Transverse colon (tissue), 4 donors: ENCODE measurements at regions of chr2 and their contacts with region 1.

Region 1: DNA sequence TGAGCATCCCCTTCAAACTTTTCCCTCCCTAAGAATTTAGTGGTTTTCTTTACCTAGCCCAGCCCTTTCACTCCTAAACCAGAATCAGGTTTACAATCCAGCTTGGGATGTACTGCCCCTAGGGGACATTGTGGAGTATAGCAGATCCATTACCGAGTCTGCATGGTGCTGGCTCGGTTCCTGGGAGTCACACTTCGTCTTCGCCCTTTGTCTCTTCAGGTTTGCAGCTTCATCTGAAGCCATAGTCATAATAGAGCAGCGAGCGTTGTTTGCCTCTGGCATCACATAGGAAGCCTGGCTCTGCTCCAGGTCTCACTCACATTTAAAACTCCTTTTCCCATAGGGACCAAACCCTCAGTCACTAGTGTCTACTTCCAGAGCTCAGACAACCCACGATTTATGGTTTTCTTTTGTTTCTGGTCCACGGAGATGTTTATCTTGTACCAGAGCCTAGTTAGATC is 16.8 kb upstream of the LYPD6 start:
- DNase-seq: peak; percentile 37
- H3K4me3 ChIP-seq: no peak overlapping the region
- H3K27ac ChIP-seq: no peak overlapping the region
- H3K4me1 ChIP-seq: peaks cover 0 to 4% (median 1%) of the 10 kb centered on the region in 4 donors
- H3K27me3 ChIP-seq: no peaks in the 10 kb centered on the region
- CTCF ChIP-seq: peak; percentile 66 to 81 (median 77)
- EP300 ChIP-seq: no peak
- POLR2A ChIP-seq: no peak

Region 2: DNA sequence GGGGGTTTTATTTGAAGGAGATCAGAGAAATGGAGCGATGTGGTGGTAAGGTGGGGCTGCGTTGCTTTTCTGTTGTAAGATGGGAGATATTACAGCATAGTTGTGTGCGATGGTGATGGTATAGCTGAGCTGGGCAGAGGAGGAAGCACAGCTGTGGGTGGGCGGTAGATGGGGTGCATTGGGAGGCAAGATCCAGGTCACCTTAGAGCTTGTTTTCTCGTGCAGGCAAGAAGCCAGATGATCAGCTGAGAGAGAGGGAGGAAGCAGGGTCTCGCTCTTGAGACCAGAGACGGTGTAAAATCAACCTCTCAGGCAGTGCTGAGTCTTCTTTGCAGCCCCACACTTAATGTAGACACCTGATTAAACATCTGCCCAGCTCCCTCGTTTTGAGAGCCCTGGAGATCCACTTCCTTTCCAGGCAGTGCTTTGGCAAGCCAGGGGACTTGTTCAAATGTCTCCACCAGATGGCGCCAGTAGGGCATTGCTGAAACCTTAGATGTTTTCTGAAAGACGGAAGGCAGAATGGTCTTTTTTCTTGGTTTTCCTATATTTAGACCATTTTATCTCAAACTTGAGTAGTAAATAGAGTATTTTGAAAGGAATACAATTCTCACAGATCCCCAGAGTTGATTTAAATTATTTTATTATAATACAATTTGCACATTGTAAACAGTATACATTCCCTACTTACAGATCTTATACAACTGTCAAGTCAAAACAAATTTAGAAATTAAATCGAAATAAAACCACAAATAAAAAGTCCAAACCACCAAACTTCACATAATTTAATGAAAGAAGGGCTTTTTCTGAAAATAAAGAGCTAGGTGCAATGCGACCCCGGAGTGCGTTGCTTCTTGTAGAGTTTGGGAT is 296.2 kb before region 1 on chr2:
- in situ Hi-C with region 1: loop called in 1 of 4 experiments (anchors 10 kb)
- intact Hi-C with region 1: no loop called
- DNase-seq: peak; percentile 83
- H3K4me3 ChIP-seq: no peak overlapping the region
- H3K27ac ChIP-seq: no peak overlapping the region
- H3K4me1 ChIP-seq: peaks cover 0 to 20% (median 5%) of the 10 kb centered on the region in 4 donors
- H3K27me3 ChIP-seq: no peaks in the 10 kb centered on the region
- CTCF ChIP-seq: peak; percentile 80 to 89 (median 85)
- EP300 ChIP-seq: no peak
- POLR2A ChIP-seq: no peak

Region 3: GRCh38 chr2:149040451-149040850 is 273.1 kb before region 1 on chr2:
- in situ Hi-C with region 1: loop called in 1 of 4 experiments (anchors 25 kb)
- intact Hi-C with region 1: no loop called
- DNase-seq: peak; percentile 45
- H3K4me3 ChIP-seq: no peak overlapping the region
- H3K27ac ChIP-seq: no peak overlapping the region
- H3K4me1 ChIP-seq: peaks cover 0 to 7% (median 2%) of the 10 kb centered on the region in 4 donors
- H3K27me3 ChIP-seq: peaks cover 19% of the 10 kb centered on the region
- CTCF ChIP-seq: peak; percentile 13 to 45 (median 21)
- EP300 ChIP-seq: no peak
- POLR2A ChIP-seq: no peak

Region 4: GRCh38 chr2:149281441-149281840 is 32.1 kb before region 1 on chr2:
- in situ Hi-C with region 1: no loop called
- intact Hi-C with region 1: no loop called
- DNase-seq: no peak
- H3K4me3 ChIP-seq: no peak overlapping the region
- H3K27ac ChIP-seq: no peak overlapping the region
- H3K4me1 ChIP-seq: no peaks in the 10 kb centered on the region
- H3K27me3 ChIP-seq: no peaks in the 10 kb centered on the region
- CTCF ChIP-seq: no peak
- EP300 ChIP-seq: no peak
- POLR2A ChIP-seq: no peak

Region 5: GRCh38 chr2:149561309-149561926 is 247.9 kb after region 1 on chr2:
- in situ Hi-C with region 1: loop called in 1 of 4 experiments (anchors 25 kb)
- intact Hi-C with region 1: no loop called
- DNase-seq: no peak
- H3K4me3 ChIP-seq: no peak overlapping the region
- H3K27ac ChIP-seq: no peak overlapping the region
- H3K4me1 ChIP-seq: peaks cover 0 to 14% (median 7%) of the 10 kb centered on the region in 4 donors
- H3K27me3 ChIP-seq: no peaks in the 10 kb centered on the region
- CTCF ChIP-seq: peak; percentile 88 to 94 (median 92)
- EP300 ChIP-seq: no peak
- POLR2A ChIP-seq: no peak